ENCODE measurements at regions of chr16 and their contacts with region 1.

Region 1: GRCh38 chr16:72093448-72094265 is at the starts of genes DHX38 and TXNL4B:
- DNase-seq: peak; percentile 99
- H3K4me3 ChIP-seq: peak within 1 kb of the TSS; percentile 59 to 98 (median 87)
- H3K27ac ChIP-seq: peak within 1 kb of the TSS; percentile 80
- H3K4me1 ChIP-seq: peaks cover 18% of the 10 kb centered on the region
- H3K27me3 ChIP-seq: no peaks in the 10 kb centered on the region
- CTCF ChIP-seq: no peak
- POLR2A ChIP-seq: peak; percentile 81
- total RNA-seq, gene DHX38: 78.4 and 78.6 TPM in 2 replicates
- total RNA-seq, gene TXNL4B: 11.7 and 12.7 TPM in 2 replicates

Region 2: DNA sequence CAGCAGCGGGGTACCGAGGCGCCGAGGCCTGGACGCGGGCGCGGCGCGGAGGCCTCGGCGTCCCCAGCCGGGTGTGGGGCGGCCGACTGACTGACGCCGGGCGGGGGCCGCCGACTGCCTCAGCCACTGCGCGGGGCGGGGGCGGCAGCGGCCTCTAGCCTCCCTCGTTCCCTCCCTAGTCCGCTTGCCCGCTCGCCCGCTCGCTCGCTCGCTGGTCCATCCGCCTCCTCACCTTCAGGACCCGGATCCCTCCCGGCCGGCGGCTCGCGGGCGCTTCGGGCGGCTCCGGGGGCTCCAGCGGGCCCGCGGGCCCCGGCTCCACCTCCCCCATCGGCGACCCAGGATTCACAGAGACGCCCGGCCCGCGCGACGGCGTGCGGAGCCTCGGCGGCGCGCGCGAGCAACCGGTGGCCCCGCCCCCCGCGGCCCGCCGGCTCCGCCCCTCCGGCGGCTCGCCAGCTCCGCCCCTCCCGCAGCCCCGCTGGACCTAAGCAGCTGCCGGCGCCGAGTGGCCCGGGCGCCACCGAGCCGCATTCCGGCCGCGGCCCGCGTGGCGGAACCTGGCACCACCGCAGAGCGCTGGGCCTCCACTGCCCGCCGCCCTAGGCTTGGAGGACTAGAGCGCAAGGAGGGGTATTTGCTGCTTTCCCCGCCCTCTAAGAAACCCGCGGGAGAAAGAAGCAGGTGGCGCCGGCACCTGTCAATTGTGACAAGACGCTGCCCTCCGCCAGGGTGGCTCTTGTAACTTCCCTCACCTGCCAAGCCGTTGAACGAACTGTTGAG is 369.9 kb before region 1 on chr16:
- CTCF ChIA-PET with region 1: no interaction called
- POLR2A ChIA-PET with region 1: no interaction called
- dilution Hi-C with region 1: no loop called
- intact Hi-C with region 1: loop called (anchors 10 kb)
- DNase-seq: peak; percentile 75
- H3K4me3 ChIP-seq: peak overlapping the region; percentile 72 to 87 (median 74)
- H3K27ac ChIP-seq: peak overlapping the region; percentile 70
- H3K4me1 ChIP-seq: peaks cover 13% of the 10 kb centered on the region
- H3K27me3 ChIP-seq: no peaks in the 10 kb centered on the region
- CTCF ChIP-seq: no peak
- POLR2A ChIP-seq: peak; percentile 52

Region 3: GRCh38 chr16:71808593-71809459 is 284.8 kb before region 1 on chr16 and contains the start of gene AP1G1:
- CTCF ChIA-PET with region 1: no interaction called
- POLR2A ChIA-PET with region 1: no interaction called
- dilution Hi-C with region 1: no loop called
- intact Hi-C with region 1: loop called (anchors 1 kb)
- DNase-seq: peak; percentile 97
- H3K4me3 ChIP-seq: peak within 1 kb of the TSS; percentile 88 to 92 (median 92)
- H3K27ac ChIP-seq: peak within 1 kb of the TSS; percentile 94
- H3K4me1 ChIP-seq: peaks cover 18% of the 10 kb centered on the region
- H3K27me3 ChIP-seq: no peaks in the 10 kb centered on the region
- CTCF ChIP-seq: no peak
- POLR2A ChIP-seq: peak; percentile 87
- total RNA-seq, gene AP1G1: 85.3 and 88.4 TPM in 2 replicates

Region 4: GRCh38 chr16:71927383-71927782 is 166.3 kb before region 1 on chr16:
- CTCF ChIA-PET with region 1: no interaction called
- POLR2A ChIA-PET with region 1: no interaction called
- dilution Hi-C with region 1: no loop called
- intact Hi-C with region 1: loop called (anchors 10 kb)
- DNase-seq: peak; percentile 90
- H3K4me3 ChIP-seq: no peak overlapping the region
- H3K27ac ChIP-seq: peak overlapping the region; percentile 75
- H3K4me1 ChIP-seq: peaks cover 55% of the 10 kb centered on the region
- H3K27me3 ChIP-seq: no peaks in the 10 kb centered on the region
- CTCF ChIP-seq: no peak
- POLR2A ChIP-seq: peak; percentile 27

Region 5: GRCh38 chr16:72008424-72009216 is 85.0 kb before region 1 on chr16 and contains the start of gene DHODH:
- CTCF ChIA-PET with region 1: no interaction called
- POLR2A ChIA-PET with region 1: no interaction called
- dilution Hi-C with region 1: no loop called
- intact Hi-C with region 1: loop called (anchors 1 kb)
- DNase-seq: peak; percentile 99
- H3K4me3 ChIP-seq: peak within 1 kb of the TSS; percentile 22 to 73 (median 47)
- H3K27ac ChIP-seq: no peak within 1 kb of the TSS
- H3K4me1 ChIP-seq: peaks cover 2% of the 10 kb centered on the region
- H3K27me3 ChIP-seq: no peaks in the 10 kb centered on the region
- CTCF ChIP-seq: peak in 1 of 2 donors; percentile 1
- POLR2A ChIP-seq: peak; percentile 84
- total RNA-seq, gene DHODH: 9.2 and 9.7 TPM in 2 replicates

Region 6: GRCh38 chr16:72066747-72067146 is 26.9 kb before region 1 on chr16:
- CTCF ChIA-PET with region 1: interaction called, 16 read pairs
- POLR2A ChIA-PET with region 1: no interaction called
- dilution Hi-C with region 1: no loop called
- intact Hi-C with region 1: loop called (anchors 1 kb)
- DNase-seq: peak; percentile 39
- H3K4me3 ChIP-seq: no peak overlapping the region
- H3K27ac ChIP-seq: no peak overlapping the region
- H3K4me1 ChIP-seq: no peaks in the 10 kb centered on the region
- H3K27me3 ChIP-seq: peaks cover 0 to 1% of the 10 kb centered on the region in 2 experiments
- CTCF ChIP-seq: peak; percentile 36 to 52
- POLR2A ChIP-seq: no peak

Region 7: GRCh38 chr16:72234387-72234786 is 140.7 kb after region 1 on chr16:
- CTCF ChIA-PET with region 1: no interaction called
- POLR2A ChIA-PET with region 1: no interaction called
- dilution Hi-C with region 1: no loop called
- intact Hi-C with region 1: no loop called
- DNase-seq: no peak
- H3K4me3 ChIP-seq: no peak overlapping the region
- H3K27ac ChIP-seq: no peak overlapping the region
- H3K4me1 ChIP-seq: no peaks in the 10 kb centered on the region
- H3K27me3 ChIP-seq: no peaks in the 10 kb centered on the region
- CTCF ChIP-seq: no peak
- POLR2A ChIP-seq: no peak

Region 8: DNA sequence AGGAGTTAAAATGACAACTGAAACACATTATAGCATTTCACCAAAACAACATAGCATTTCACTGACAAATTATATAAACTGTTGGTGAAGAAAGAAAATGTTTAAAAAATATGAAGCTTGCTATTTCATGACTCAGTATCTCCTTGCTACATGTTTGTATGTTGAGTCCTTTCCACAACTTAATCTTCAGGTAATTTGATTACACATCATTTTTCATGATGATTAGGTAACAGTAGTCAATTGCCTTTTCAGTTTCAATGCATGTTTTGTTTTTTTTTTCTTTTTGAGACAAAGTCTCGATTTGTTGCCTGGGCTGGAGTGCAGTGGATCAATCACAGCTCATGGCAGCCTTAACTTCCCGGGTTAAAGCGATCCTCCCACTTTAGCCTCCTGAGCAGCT is 256.1 kb after region 1 on chr16:
- CTCF ChIA-PET with region 1: no interaction called
- POLR2A ChIA-PET with region 1: no interaction called
- dilution Hi-C with region 1: no loop called
- intact Hi-C with region 1: no loop called
- DNase-seq: no peak
- H3K4me3 ChIP-seq: no peak overlapping the region
- H3K27ac ChIP-seq: no peak overlapping the region
- H3K4me1 ChIP-seq: no peaks in the 10 kb centered on the region
- H3K27me3 ChIP-seq: no peaks in the 10 kb centered on the region
- CTCF ChIP-seq: no peak
- POLR2A ChIP-seq: no peak

Measured in endothelial cell of umbilical vein (primary cell).